ENCODE measurements at regions of chr7 and their contacts with region 1.

Region 1: DNA sequence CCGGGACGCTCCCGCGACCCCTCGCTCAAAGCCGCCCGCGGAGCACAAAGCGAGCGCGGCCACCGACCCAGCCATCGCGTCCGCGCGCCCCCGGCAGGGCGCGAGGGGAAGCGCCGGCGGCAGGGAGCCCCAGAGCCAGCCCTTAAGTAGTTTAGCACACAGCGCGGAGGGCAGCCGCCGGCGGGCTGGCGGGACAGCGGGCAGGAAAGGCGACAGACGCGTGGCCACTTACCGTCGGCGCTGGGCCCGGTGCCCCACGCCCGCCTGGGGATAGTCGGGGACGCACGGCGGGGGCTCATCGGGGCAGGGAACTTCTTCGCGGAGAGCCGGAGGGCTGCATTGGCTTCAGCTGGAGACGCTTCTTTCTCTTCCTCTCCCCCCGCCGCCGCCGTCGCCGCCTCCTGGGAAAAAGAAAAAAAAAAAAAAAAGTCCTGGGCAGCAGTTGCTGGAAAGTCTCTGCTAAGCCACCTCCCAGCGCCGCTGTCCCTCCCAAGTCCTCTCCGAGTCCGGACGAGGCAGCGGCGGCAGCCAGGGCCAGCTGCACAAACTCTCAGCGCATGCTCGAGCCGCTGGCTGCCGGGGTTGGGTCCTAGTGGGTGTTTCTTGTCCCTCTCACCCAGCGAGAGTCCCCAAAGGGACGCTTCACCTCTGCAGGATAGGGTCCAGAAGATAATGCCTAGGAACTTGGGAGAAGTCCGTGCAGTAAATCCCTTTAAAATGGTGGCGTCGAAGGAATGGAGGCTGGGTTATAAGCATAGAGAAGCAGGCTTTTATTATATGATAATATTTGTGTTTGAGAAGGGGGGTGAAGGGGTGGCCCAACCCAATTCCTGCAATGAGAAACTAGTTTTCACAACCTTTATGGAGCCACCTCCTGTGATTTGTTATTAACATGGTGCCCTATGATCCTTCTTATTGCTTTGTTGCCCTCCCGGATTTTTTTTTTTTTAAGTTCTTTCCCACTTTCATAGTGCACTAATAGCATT is at the start of gene TSPAN12:
- DNase-seq: peak in 41 of 42 donors; percentile 41 to 82 (median 65)

Region 2: DNA sequence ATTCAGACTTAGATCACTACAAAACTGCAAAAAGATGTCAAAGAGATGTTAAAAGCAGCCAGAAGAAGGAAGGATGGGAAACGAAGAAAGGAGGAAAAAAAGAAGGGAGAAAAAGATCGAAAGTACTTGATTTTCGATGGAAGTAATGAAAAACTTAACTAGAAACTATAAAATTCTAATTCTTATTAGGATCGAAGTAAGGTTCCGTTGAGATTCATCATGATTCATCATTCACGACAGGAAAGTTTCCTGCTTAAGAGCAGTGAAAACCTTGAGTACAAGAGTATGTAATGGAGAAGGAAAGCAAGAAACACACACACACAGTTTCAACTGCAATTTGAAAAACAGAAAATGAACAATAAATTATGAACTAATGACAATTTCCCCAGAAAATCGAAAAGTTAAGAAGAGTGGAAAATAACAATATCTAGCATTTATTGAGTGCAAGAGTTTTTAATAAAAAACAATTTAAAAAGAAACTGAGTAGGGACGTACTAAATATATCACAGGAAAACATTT is 91.6 kb after region 1 on chr7:
- intact Hi-C with region 1: loop called (anchors 5 kb)
- DNase-seq: no peak

Measured in head of caudate nucleus (tissue), 42 donors.